ENCODE measurements at regions of chr12 and their contacts with region 1.

Region 1: DNA sequence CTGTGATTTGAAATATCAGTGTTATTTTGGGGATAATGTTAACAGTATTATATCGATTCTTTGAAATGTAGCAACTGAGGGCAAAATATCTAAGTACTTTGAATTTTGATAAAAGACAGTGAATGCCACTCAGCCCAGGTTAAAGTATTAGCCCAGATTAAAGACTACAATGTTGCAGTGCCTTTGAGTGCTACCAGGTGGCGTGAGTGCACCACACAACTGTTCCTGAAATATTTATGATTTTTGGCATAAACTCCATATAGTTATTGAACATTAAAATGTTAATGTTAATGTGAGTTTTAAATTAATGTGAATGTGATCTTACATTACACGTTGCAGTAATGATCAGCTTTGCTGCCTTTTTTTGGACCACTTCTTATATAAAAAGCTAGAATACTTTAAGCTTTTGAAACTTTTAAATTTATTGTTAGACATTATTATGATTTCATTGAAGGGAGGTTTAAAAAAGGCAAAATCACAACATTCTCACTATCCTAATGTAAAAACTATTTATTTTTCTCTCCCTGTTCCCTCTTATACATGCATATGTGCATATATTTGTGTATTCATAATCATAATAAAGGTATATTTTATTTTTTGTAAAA is 22.5 kb downstream of the MRPS35 start:
- DNase-seq: peak; percentile 82
- ATAC-seq: peak; percentile 47
- H3K4me3 ChIP-seq: no peak overlapping the region
- H3K27ac ChIP-seq: no peak overlapping the region
- H3K4me1 ChIP-seq: 0 out of 2 replicates have a peak, but pooled peaks cover 4% of the 10 kb centered on the region
- H3K27me3 ChIP-seq: no peaks in the 10 kb centered on the region
- CTCF ChIP-seq: peak; percentile 98

Region 2: DNA sequence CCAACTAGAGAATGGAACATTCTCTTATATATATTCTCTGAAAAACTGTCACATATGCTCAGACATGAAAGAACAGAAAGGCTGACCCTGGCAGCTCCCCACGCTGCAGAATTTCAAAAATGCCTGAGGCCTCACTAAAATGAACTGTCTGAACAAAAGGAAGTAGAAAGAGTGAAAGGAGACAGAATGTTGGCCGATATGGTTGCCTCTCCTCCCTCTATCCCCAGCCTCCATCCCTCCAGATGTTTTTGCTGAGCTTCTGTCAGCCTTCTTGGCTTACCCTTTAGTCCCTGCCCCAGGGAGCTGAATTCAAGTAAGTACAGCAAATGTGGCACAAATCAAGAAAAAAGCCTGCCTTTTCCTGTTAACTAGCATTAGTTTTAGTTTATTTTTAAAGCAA is 279.7 kb before region 1 on chr12:
- CTCF ChIA-PET with region 1: no interaction called
- POLR2A ChIA-PET with region 1: no interaction called
- intact Hi-C with region 1: no loop called
- DNase-seq: no peak
- ATAC-seq: no peak
- H3K4me3 ChIP-seq: no peak overlapping the region
- H3K27ac ChIP-seq: no peak overlapping the region
- H3K4me1 ChIP-seq: no peaks in the 10 kb centered on the region
- H3K27me3 ChIP-seq: no peaks in the 10 kb centered on the region
- CTCF ChIP-seq: no peak

Region 3: GRCh38 chr12:27779920-27780611 is 46.9 kb after region 1 on chr12 and contains the starts of genes KLHL42 and MANSC4:
- CTCF ChIA-PET with region 1: interaction called, 13 read pairs
- POLR2A ChIA-PET with region 1: no interaction called
- intact Hi-C with region 1: no loop called
- DNase-seq: peak; percentile 72
- ATAC-seq: peak; percentile 64
- H3K4me3 ChIP-seq: peak within 1 kb of the TSS; percentile 78
- H3K27ac ChIP-seq: peak within 1 kb of the TSS; percentile 64
- H3K4me1 ChIP-seq: peaks cover 38% of the 10 kb centered on the region
- H3K27me3 ChIP-seq: no peaks in the 10 kb centered on the region
- CTCF ChIP-seq: no peak
- total RNA-seq, gene KLHL42: 74.2 and 82.6 TPM in 2 replicates
- total RNA-seq, gene MANSC4: 1.9 and 4.1 TPM in 2 replicates

Region 4: GRCh38 chr12:27794818-27795584 is 61.8 kb after region 1 on chr12:
- CTCF ChIA-PET with region 1: interaction called, 6 read pairs
- POLR2A ChIA-PET with region 1: interaction called, 11 read pairs
- intact Hi-C with region 1: no loop called
- DNase-seq: no peak
- ATAC-seq: 0 out of 2 replicates have a peak, but pooled peaks have one; percentile 32
- H3K4me3 ChIP-seq: no peak overlapping the region
- H3K27ac ChIP-seq: no peak overlapping the region
- H3K4me1 ChIP-seq: no peaks in the 10 kb centered on the region
- H3K27me3 ChIP-seq: no peaks in the 10 kb centered on the region
- CTCF ChIP-seq: no peak

Region 5: DNA sequence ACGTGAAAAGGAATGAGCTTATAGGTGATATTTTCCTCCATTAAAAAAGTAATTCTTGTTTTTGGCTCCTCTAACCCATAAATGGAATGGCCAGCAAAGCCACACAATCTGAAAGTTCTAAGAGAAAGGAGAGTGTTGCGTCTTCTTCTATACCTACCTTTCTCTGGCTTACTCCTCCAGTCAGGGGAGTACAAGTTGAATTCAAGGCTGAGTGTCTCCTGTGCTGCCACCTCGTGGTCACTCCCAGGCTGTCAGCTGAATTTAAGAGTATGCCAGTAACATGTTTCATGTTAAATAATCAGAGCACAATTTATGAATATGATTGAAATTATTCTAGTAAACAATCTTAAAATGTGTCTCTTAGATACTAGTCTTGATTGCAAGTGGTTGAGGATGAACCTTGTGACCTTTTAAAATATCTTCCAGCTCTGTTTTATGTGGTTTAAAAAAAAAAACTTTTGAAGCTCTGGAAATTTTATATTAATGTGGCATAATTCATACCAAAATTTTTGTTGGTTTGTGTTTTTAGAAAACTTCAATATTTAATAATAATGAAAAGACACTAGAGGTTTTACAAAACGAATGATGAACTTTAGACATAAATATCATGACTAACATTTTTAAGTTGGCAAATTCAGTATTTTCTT is 207.7 kb after region 1 on chr12:
- CTCF ChIA-PET with region 1: interaction called, 10 read pairs
- POLR2A ChIA-PET with region 1: interaction called, 19 read pairs
- intact Hi-C with region 1: loop called (anchors 1 kb)
- DNase-seq: peak; percentile 96
- ATAC-seq: peak; percentile 100
- H3K4me3 ChIP-seq: no peak overlapping the region
- H3K27ac ChIP-seq: no peak overlapping the region
- H3K4me1 ChIP-seq: no peaks in the 10 kb centered on the region
- H3K27me3 ChIP-seq: no peaks in the 10 kb centered on the region
- CTCF ChIP-seq: peak; percentile 99

Measured in PC-3 (cell line).